ENCODE measurements at regions of chr15 and their contacts with region 1.

Region 1: DNA sequence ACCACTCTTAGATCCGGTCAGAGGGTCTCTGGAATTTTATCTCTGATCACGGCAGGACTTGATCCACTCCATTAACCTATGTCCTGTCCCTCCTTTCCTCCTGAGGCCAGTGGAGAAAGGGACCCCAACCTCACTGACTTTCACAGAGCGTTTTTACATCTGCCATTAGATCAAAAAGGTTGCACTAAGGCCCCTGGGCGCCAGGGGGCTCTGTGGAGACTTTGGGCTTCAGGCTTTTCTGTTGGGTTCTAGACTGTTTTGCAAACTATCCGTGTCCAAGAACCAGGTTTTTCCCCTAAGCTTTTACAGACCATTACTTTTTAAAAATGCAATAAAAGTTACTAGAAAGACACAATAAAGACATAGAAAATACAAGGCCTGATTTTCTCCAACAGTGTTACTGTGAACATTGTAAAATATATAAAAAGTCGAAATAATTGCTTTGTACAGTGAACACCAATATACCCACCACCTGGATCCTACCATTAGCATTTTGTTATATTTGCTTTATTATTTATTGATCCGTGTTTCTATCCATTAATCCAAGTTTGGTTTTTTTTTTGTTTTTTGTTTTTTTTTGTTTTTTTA is 159.7 kb downstream of the POLR2M start:
- DNase-seq: peak in 8 of 9 experiments; percentile 8 to 49 (median 24)
- ATAC-seq: no peak
- H3K4me3 ChIP-seq: no peak overlapping the region
- H3K4me3 Mint-ChIP-seq: no peak overlapping the region
- H3K27ac ChIP-seq: no peak overlapping the region
- H3K27ac Mint-ChIP-seq: no peak overlapping the region
- H3K4me1 ChIP-seq: peaks cover 10% of the 10 kb centered on the region
- H3K4me1 Mint-ChIP-seq: peaks cover 9% of the 10 kb centered on the region
- H3K27me3 ChIP-seq: peaks cover 0 to 4% of the 10 kb centered on the region in 2 experiments
- H3K27me3 Mint-ChIP-seq: peaks cover 31% of the 10 kb centered on the region
- CTCF ChIP-seq: peak; percentile 67

Region 2: GRCh38 chr15:57340682-57341259 is 525.5 kb before region 1 on chr15:
- CTCF ChIA-PET with region 1: no interaction called
- POLR2A ChIA-PET with region 1: no interaction called
- intact Hi-C with region 1: loop called in 1 of 2 experiments (anchors 10 kb)
- DNase-seq: peak in 4 of 9 experiments; percentile 17 to 49 (median 36)
- ATAC-seq: peak; percentile 46
- H3K4me3 ChIP-seq: no peak overlapping the region
- H3K4me3 Mint-ChIP-seq: no peak overlapping the region
- H3K27ac ChIP-seq: no peak overlapping the region
- H3K27ac Mint-ChIP-seq: no peak overlapping the region
- H3K4me1 ChIP-seq: no peaks in the 10 kb centered on the region
- H3K4me1 Mint-ChIP-seq: no peaks in the 10 kb centered on the region
- H3K27me3 ChIP-seq: no peaks in the 10 kb centered on the region
- H3K27me3 Mint-ChIP-seq: peaks cover 5% of the 10 kb centered on the region
- CTCF ChIP-seq: peak; percentile 74

Region 3: DNA sequence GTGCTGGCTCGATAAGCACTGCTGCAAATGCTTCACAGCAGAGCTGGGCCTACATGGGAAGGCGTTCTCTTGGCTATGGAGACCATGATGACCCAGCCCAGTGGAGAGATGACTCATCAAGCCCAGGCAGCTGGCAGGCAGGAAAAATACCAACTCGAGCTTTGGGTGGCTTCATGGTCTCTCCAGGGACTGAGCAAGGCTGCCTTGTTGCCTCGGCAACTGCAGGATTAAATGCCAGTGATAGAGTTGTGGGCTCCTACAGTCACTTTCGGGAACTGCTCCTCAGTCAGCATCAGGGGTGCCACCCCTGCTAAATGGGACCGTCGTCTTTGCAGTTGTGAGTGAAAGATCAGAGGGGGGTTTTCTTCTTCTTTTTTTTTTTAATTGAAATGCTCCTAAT is 329.2 kb before region 1 on chr15:
- CTCF ChIA-PET with region 1: no interaction called
- POLR2A ChIA-PET with region 1: no interaction called
- intact Hi-C with region 1: no loop called
- DNase-seq: no peak
- ATAC-seq: no peak
- H3K4me3 ChIP-seq: no peak overlapping the region
- H3K4me3 Mint-ChIP-seq: no peak overlapping the region
- H3K27ac ChIP-seq: no peak overlapping the region
- H3K27ac Mint-ChIP-seq: no peak overlapping the region
- H3K4me1 ChIP-seq: no peaks in the 10 kb centered on the region
- H3K4me1 Mint-ChIP-seq: no peaks in the 10 kb centered on the region
- H3K27me3 ChIP-seq: no peaks in the 10 kb centered on the region
- H3K27me3 Mint-ChIP-seq: no peaks in the 10 kb centered on the region
- CTCF ChIP-seq: no peak

Region 4: GRCh38 chr15:57732526-57733331 is 133.5 kb before region 1 on chr15:
- CTCF ChIA-PET with region 1: interaction called, 3 read pairs
- POLR2A ChIA-PET with region 1: no interaction called
- intact Hi-C with region 1: loop called in 1 of 2 experiments (anchors 10 kb)
- DNase-seq: peak in 8 of 9 experiments; percentile 17 to 61 (median 50)
- ATAC-seq: no peak
- H3K4me3 ChIP-seq: no peak overlapping the region
- H3K4me3 Mint-ChIP-seq: no peak overlapping the region
- H3K27ac ChIP-seq: no peak overlapping the region
- H3K27ac Mint-ChIP-seq: no peak overlapping the region
- H3K4me1 ChIP-seq: no peaks in the 10 kb centered on the region
- H3K4me1 Mint-ChIP-seq: peaks cover 8% of the 10 kb centered on the region
- H3K27me3 ChIP-seq: no peaks in the 10 kb centered on the region
- H3K27me3 Mint-ChIP-seq: no peaks in the 10 kb centered on the region
- CTCF ChIP-seq: peak; percentile 92

Region 5: DNA sequence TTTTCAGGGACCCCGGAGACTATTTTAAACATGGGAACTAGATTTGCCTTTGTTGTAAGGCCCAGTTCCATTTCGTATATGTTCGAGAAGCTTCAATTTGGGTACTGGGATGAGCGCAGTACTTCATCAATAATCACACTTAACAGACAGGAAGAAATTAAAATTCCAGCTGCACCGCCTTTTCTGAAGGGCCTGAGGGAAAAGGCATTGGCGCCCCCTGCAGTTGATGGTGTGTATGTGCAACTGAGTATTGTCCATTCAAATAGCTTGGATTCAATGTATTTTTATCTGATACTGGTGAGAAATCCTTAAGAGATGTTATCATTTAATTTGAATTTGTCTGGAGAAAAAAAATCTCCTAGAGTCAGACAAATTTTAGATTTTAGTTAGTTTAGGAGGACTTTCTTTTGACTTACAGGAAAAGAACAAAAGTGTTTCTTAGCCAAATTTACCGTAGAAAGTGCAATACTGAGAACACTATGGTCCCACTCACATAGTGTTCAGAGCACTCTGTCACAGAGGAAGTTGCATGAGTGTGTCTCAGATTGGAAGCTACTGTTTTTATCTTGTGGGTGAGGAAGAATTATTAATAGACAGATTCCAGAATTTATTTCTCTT is 204.7 kb after region 1 on chr15:
- CTCF ChIA-PET with region 1: interaction called, 4 read pairs
- POLR2A ChIA-PET with region 1: no interaction called
- intact Hi-C with region 1: loop called in 1 of 2 experiments (anchors 10 kb)
- DNase-seq: peak in 5 of 9 experiments; percentile 8 to 48 (median 37)
- ATAC-seq: no peak
- H3K4me3 ChIP-seq: no peak overlapping the region
- H3K4me3 Mint-ChIP-seq: no peak overlapping the region
- H3K27ac ChIP-seq: no peak overlapping the region
- H3K27ac Mint-ChIP-seq: no peak overlapping the region
- H3K4me1 ChIP-seq: no peaks in the 10 kb centered on the region
- H3K4me1 Mint-ChIP-seq: peaks cover 4% of the 10 kb centered on the region
- H3K27me3 ChIP-seq: peaks cover 0 to 7% of the 10 kb centered on the region in 2 experiments
- H3K27me3 Mint-ChIP-seq: peaks cover 36% of the 10 kb centered on the region
- CTCF ChIP-seq: peak; percentile 67

Region 6: GRCh38 chr15:58124585-58124984 is 258.3 kb after region 1 on chr15:
- CTCF ChIA-PET with region 1: no interaction called
- POLR2A ChIA-PET with region 1: no interaction called
- intact Hi-C with region 1: no loop called
- DNase-seq: no peak
- ATAC-seq: no peak
- H3K4me3 ChIP-seq: no peak overlapping the region
- H3K4me3 Mint-ChIP-seq: no peak overlapping the region
- H3K27ac ChIP-seq: no peak overlapping the region
- H3K27ac Mint-ChIP-seq: no peak overlapping the region
- H3K4me1 ChIP-seq: no peaks in the 10 kb centered on the region
- H3K4me1 Mint-ChIP-seq: no peaks in the 10 kb centered on the region
- H3K27me3 ChIP-seq: no peaks in the 10 kb centered on the region
- H3K27me3 Mint-ChIP-seq: peaks cover 14% of the 10 kb centered on the region
- CTCF ChIP-seq: no peak

Region 7: DNA sequence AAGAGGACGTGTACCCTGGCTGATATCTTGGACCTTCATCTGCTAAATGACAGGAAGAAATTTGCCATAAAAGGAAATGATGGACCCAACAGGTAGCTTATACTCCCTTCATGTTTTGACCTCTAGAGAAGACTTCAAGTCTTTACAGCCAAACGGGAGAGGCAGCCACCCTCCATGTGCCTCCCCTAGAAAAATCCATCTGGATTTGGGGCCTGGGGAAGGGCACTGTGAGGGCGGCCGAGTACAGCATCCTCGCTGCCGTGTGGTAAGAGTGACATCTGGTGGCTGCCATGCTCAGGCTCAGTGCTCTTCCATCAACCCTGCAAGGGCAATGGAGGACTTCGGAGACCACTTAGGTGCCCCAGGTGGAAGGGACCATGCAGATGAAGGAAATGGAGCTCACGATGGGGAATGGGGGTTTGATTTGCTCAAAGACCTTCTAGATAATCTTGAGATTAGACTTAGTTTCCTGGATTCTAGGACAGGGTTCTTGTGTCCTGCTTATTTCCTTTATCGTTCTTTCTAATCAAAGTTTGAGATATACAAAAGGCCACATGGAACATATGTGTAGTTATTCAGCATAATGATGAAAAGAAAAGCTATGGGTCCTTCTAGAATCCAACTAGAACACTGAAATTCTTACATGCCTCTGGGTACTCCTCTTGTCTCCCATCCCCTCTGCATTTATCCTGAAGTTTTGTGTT is 316.4 kb after region 1 on chr15:
- CTCF ChIA-PET with region 1: no interaction called
- POLR2A ChIA-PET with region 1: no interaction called
- intact Hi-C with region 1: loop called (anchors 5 kb)
- DNase-seq: peak in 6 of 9 experiments; percentile 3 to 43 (median 16)
- ATAC-seq: no peak
- H3K4me3 ChIP-seq: no peak overlapping the region
- H3K4me3 Mint-ChIP-seq: no peak overlapping the region
- H3K27ac ChIP-seq: no peak overlapping the region
- H3K27ac Mint-ChIP-seq: no peak overlapping the region
- H3K4me1 ChIP-seq: no peaks in the 10 kb centered on the region
- H3K4me1 Mint-ChIP-seq: peaks cover 11% of the 10 kb centered on the region
- H3K27me3 ChIP-seq: peaks cover 4% of the 10 kb centered on the region in 2 experiments
- H3K27me3 Mint-ChIP-seq: peaks cover 29% of the 10 kb centered on the region
- CTCF ChIP-seq: peak; percentile 17